Caco-2 (cell line): ENCODE measurements at regions of chr11 and their contacts with region 1.

Region 1: DNA sequence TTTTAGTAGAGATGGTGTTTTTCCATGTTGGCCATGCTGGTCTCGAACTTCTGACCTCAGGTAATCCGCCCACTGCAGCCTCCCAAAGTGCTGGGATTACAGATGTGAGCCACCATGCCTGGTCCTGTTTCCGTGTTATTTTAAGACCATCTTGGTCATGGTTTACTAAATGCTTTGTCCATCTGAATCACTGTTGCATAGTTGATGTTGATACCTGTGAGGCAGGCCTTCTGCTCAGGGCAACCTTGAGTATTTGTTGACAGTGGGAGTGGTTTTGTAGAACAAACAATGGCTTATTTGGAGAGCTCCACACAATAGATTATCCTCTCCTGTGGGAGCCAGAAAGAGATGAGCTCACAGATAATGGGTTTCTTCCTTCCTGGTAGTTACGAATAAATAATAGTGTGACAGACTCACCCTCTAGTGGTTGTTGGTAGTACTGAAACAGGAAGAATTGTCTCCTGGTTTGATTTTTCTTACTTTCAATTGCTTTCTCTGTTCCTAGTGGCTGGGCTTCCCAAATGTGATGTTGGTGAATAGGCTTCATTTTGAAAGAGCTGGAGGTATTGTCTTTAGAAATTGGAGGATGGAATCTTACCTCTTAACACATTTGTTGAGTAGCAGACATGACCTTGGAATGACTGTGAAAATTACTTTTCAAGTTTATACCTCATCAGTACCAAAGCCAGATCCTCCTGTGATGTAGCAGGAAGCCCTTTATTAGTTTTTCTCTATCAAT is 39.0 kb downstream of the CTNND1 start:
- DNase-seq: peak; percentile 77 to 85
- H3K4me3 ChIP-seq: no peak overlapping the region
- H3K4me3 Mint-ChIP-seq: peak overlapping the region; percentile 38
- H3K27ac Mint-ChIP-seq: peak overlapping the region; percentile 64
- H3K4me1 ChIP-seq: peaks cover 25% of the 10 kb centered on the region
- H3K4me1 Mint-ChIP-seq: peaks cover 33% of the 10 kb centered on the region
- H3K27me3 ChIP-seq: no peaks in the 10 kb centered on the region
- H3K27me3 Mint-ChIP-seq: no peaks in the 10 kb centered on the region
- CTCF ChIP-seq: peak; percentile 78 to 82

Region 2: GRCh38 chr11:57712256-57713150 is 88.1 kb before region 1 on chr11 and contains the start of gene TMX2:
- CTCF ChIA-PET with region 1: interaction called, 18 read pairs
- POLR2A ChIA-PET with region 1: interaction called, 12 read pairs
- intact Hi-C with region 1: loop called (anchors 1 kb)
- DNase-seq: peak; percentile 95 to 98
- H3K4me3 ChIP-seq: peak within 1 kb of the TSS; percentile 91
- H3K4me3 Mint-ChIP-seq: peak within 1 kb of the TSS; percentile 97
- H3K27ac Mint-ChIP-seq: peak within 1 kb of the TSS; percentile 99
- H3K4me1 ChIP-seq: peaks cover 6% of the 10 kb centered on the region; the same call in 1 of the 2 replicates
- H3K4me1 Mint-ChIP-seq: peaks cover 18% of the 10 kb centered on the region
- H3K27me3 ChIP-seq: no peaks in the 10 kb centered on the region
- H3K27me3 Mint-ChIP-seq: no peaks in the 10 kb centered on the region
- CTCF ChIP-seq: no peak
- total RNA-seq, gene TMX2: 150 and 152 TPM in 2 replicates

Region 3: DNA sequence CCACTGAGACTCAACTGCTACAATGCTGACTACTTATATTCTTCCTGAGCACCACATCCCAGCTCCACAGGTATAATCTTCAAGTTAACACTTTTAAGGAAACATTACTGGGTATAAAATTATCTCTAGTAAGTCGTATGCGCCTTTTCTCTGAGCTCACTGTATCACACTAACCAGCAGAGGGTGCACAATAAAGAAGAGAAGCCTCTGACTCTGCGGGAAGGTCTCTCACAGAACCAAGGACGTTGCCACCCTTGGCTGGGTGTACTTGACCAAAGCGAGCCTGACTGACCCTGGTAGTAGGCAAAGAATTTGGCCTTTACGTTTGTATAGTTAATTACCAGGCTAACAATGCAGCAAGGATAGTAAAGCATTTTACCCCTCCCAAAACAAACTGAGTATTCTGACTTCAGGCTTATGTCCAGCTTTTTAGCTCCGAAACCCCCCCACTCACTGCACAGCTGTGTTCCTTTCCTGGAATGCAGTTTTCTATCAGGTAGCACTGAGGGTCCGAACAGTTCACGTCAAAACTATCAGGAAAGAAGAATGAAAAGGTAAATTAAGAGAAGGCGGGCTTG is 48.8 kb before region 1 on chr11 and contains the start of gene BTBD18:
- CTCF ChIA-PET with region 1: interaction called, 101 read pairs
- POLR2A ChIA-PET with region 1: interaction called, 9 read pairs
- intact Hi-C with region 1: loop called (anchors 1 kb)
- DNase-seq: peak; percentile 66 to 67
- H3K4me3 ChIP-seq: no peak within 1 kb of the TSS
- H3K4me3 Mint-ChIP-seq: no peak within 1 kb of the TSS
- H3K27ac Mint-ChIP-seq: peak within 1 kb of the TSS; percentile 12
- H3K4me1 ChIP-seq: peaks cover 12% of the 10 kb centered on the region; the same call in 1 of the 2 replicates
- H3K4me1 Mint-ChIP-seq: peaks cover 19% of the 10 kb centered on the region
- H3K27me3 ChIP-seq: no peaks in the 10 kb centered on the region
- H3K27me3 Mint-ChIP-seq: no peaks in the 10 kb centered on the region
- CTCF ChIP-seq: peak; percentile 54 to 58
- total RNA-seq, gene BTBD18: not detected in 2 replicates

Region 4: GRCh38 chr11:57778318-57779037 is 22.1 kb before region 1 on chr11:
- CTCF ChIA-PET with region 1: interaction called, 54 read pairs
- POLR2A ChIA-PET with region 1: interaction called, 77 read pairs
- intact Hi-C with region 1: loop called (anchors 1 kb)
- DNase-seq: peak; percentile 90 to 94
- H3K4me3 ChIP-seq: peak overlapping the region; percentile 23
- H3K4me3 Mint-ChIP-seq: peak overlapping the region; percentile 65
- H3K27ac Mint-ChIP-seq: peak overlapping the region; percentile 94
- H3K4me1 ChIP-seq: peaks cover 87% of the 10 kb centered on the region
- H3K4me1 Mint-ChIP-seq: peaks cover 80% of the 10 kb centered on the region
- H3K27me3 ChIP-seq: no peaks in the 10 kb centered on the region
- H3K27me3 Mint-ChIP-seq: no peaks in the 10 kb centered on the region
- CTCF ChIP-seq: no peak